Left cardiac atrium (tissue), 4 donors: ENCODE measurements at regions of chr6 and their contacts with region 1.

Region 1: GRCh38 chr6:14452567-14453527 is 335.3 kb downstream of the CD83 start:
- DNase-seq: no peak
- ATAC-seq: no peak

Region 2: DNA sequence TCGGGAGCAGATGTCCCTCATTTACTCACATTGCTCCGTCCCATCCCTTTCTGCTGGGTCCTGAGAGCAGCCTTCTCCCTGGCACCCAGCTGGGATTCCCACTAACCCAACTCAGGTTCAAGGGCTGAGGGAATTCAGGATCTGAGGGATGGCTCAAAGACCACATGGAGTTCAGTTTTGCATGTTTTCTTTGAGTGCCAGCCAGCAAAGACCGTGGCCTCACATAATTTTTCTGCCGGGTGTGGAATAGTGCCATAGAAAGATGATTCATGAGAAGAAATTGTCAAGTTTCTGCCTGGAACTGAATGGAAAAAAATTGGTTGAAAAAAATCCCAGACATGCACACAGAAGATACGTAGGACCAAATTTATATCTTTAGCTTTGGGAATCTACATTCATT is 166.7 kb before region 1 on chr6:
- intact Hi-C with region 1: no loop called
- DNase-seq: no peak
- ATAC-seq: peak; percentile 65 to 86

Region 3: DNA sequence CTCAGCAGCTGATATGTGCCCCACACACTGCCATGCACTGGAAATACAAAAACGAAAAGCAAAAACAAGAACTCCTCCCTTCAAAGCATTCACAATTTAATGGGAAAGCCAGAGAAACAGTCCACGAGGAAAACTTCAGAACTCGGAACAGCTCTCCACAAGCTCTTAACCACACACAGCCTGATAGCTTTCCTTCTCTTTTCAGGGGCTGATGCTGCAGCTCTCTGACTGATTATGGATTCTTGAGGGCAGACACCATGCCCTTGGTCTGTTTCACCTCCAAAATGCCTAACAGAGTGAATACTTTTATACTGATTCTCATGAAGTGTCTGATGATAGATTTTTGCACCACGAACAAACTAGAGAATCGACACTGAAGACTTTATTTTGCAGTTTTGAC is 53.2 kb before region 1 on chr6:
- intact Hi-C with region 1: loop called in 1 of 2 experiments (anchors 2 kb)
- DNase-seq: no peak
- ATAC-seq: no peak

Region 4: DNA sequence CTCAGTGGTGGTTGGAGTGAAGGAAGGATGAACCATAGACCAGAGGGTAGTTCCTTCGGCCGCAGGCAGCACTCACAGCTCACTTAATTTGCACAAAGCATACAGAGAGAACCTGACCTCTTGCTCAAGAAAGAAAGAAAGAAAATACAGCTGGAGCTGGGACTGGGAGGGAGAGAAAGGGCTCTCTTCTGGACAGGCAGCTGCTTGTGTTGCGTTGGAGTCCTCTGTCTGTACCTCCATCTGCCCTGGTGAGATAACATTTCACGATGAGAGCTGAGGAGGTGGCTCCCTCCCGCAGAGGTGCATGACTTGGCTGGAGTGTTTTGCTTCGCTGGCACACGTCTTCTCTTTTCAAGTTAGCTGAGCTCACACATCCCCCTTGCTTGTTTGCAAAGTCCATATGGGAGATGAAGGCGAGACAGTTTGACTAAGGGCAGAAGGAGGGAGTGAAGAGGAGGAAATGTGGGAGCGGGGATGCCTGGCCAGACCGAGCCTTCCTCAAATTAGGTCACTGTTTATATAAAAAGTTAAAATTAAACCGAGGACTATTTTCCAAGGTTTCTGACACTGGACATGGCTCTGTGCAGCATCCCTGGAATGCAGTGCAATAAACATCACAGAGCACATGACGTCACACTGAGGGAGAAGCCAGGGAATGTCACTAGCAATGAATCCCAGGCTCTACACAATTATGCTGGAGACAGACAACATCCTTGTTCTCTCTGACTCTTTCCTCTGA is 24.1 kb after region 1 on chr6:
- intact Hi-C with region 1: no loop called
- DNase-seq: peak; percentile 60
- ATAC-seq: peak; percentile 87 to 95

Region 5: GRCh38 chr6:14784596-14785492 is 332.0 kb after region 1 on chr6:
- intact Hi-C with region 1: no loop called
- DNase-seq: no peak
- ATAC-seq: no peak